ENCODE measurements at regions of chr14 and their contacts with region 1.

Region 1: DNA sequence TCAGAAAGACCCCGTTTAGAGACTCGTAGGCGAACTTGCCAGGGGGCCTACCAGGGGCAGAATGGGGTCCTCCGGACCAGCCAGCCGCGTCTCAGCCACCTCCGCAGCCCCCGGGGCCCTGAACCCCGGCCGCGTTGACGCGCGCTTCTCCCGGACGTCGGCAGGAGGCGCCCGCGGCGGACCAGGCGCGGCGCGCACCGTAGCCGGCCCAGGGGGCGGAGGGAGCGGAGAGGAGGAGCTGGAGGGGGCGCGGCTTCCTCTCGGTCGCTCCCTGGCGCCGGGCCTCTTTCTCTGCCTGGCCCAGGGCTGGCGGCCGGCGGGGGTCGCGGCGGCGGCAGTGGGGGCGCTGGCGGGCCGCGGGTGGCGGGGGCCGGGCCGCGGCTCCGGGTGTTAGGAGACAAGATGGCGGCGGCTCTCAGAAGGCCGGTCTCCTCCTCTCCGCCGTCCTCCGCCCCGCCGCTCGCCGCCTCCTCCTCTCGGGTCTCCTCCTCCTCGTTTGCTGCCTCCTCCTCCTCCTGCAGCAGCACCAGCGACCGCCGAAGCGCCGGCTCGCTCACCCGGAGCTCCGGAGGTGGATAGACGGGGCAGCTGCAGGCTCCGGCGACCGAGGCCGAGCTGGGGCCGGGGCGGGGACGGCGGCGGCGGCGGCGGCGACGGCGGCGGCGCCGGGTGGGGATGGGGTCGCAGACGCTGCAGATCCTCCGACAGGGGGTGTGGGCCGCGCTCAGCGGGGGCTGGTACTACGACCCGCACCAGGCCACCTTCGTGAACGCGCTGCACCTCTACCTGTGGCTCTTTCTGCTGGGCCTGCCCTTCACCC is at the start of gene PCNX1:
- DNase-seq: peak; percentile 90
- H3K4me3 Mint-ChIP-seq: peak within 1 kb of the TSS; percentile 89
- H3K27ac Mint-ChIP-seq: peak within 1 kb of the TSS; percentile 81
- H3K4me1 Mint-ChIP-seq: peaks cover 13% of the 10 kb centered on the region
- H3K27me3 Mint-ChIP-seq: no peaks in the 10 kb centered on the region
- CTCF ChIP-seq: peak; percentile 76
- total RNA-seq, gene PCNX1: 30.4 and 34.1 TPM in 2 replicates

Region 2: GRCh38 chr14:70707138-70708038 is 200.0 kb before region 1 on chr14:
- CTCF ChIA-PET with region 1: no interaction called
- intact Hi-C with region 1: no loop called
- DNase-seq: peak; percentile 81
- H3K4me3 Mint-ChIP-seq: no peak overlapping the region
- H3K27ac Mint-ChIP-seq: peak overlapping the region; percentile 22
- H3K4me1 Mint-ChIP-seq: peaks cover 23% of the 10 kb centered on the region
- H3K27me3 Mint-ChIP-seq: no peaks in the 10 kb centered on the region
- CTCF ChIP-seq: no peak

Region 3: DNA sequence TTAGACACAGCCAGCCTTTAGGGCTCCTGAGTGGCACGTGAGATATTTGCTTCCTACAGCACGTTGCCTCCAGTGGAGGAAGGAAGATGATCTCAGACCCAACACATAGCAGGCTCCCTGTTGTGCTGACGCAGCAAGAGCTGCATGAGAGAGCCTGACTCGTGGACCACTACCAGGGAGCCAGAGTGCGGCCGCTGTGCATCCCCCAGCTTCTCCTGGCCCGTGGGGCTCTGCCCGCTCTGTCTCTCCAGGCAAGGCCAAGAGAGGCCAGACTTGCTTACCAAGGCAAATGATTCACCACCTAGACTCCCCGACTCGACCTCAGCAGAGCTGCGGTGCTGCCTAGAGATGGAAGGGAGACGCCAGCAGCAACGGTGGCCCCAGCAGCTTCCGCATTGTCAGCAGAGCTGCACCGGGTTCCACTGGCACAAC is 135.6 kb before region 1 on chr14:
- CTCF ChIA-PET with region 1: no interaction called
- intact Hi-C with region 1: no loop called
- DNase-seq: no peak
- H3K4me3 Mint-ChIP-seq: no peak overlapping the region
- H3K27ac Mint-ChIP-seq: no peak overlapping the region
- H3K4me1 Mint-ChIP-seq: no peaks in the 10 kb centered on the region
- H3K27me3 Mint-ChIP-seq: no peaks in the 10 kb centered on the region
- CTCF ChIP-seq: no peak

Region 4: GRCh38 chr14:70955543-70956480 is 48.4 kb after region 1 on chr14:
- CTCF ChIA-PET with region 1: interaction called, 6 read pairs
- intact Hi-C with region 1: loop called (anchors 5 kb)
- DNase-seq: peak; percentile 17
- H3K4me3 Mint-ChIP-seq: no peak overlapping the region
- H3K27ac Mint-ChIP-seq: no peak overlapping the region
- H3K4me1 Mint-ChIP-seq: no peaks in the 10 kb centered on the region
- H3K27me3 Mint-ChIP-seq: no peaks in the 10 kb centered on the region
- CTCF ChIP-seq: peak; percentile 24

Region 5: GRCh38 chr14:70972107-70972976 is 65.0 kb after region 1 on chr14:
- CTCF ChIA-PET with region 1: interaction called, 5 read pairs
- intact Hi-C with region 1: loop called (anchors 2 kb)
- DNase-seq: peak; percentile 76
- H3K4me3 Mint-ChIP-seq: no peak overlapping the region
- H3K27ac Mint-ChIP-seq: no peak overlapping the region
- H3K4me1 Mint-ChIP-seq: no peaks in the 10 kb centered on the region
- H3K27me3 Mint-ChIP-seq: no peaks in the 10 kb centered on the region
- CTCF ChIP-seq: peak; percentile 63

Region 6: GRCh38 chr14:71121711-71122110 is 214.3 kb after region 1 on chr14:
- CTCF ChIA-PET with region 1: no interaction called
- intact Hi-C with region 1: no loop called
- DNase-seq: no peak
- H3K4me3 Mint-ChIP-seq: no peak overlapping the region
- H3K27ac Mint-ChIP-seq: no peak overlapping the region
- H3K4me1 Mint-ChIP-seq: peaks cover 23% of the 10 kb centered on the region
- H3K27me3 Mint-ChIP-seq: no peaks in the 10 kb centered on the region
- CTCF ChIP-seq: no peak

Measured in Calu3 (cell line).